ENCODE measurements at regions of chr9 and their contacts with region 1.

Region 1: DNA sequence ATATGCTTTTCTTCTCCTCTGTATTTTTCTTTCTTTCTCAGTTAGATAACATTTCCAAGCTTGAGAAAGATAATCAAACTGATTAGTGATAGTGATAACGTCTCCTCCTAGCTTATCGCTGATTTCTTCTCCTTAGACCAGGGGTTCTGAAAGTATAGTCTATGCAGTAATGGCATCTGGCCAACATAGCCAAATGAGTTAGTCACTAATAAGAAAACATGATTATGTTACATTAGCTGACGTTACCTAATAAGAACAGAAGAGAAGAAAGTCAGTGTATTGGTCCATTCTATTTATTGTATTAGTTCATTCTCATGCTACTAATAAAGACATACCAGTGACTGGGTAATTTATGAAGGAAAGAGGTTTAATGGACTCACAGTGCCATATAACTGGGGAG is 111.2 kb downstream of the STRBP start:
- DNase-seq: no peak
- H3K4me3 Mint-ChIP-seq: no peak overlapping the region
- H3K27ac Mint-ChIP-seq: no peak overlapping the region
- H3K4me1 Mint-ChIP-seq: no peaks in the 10 kb centered on the region
- H3K27me3 Mint-ChIP-seq: no peaks in the 10 kb centered on the region
- CTCF ChIP-seq: no peak

Region 2: DNA sequence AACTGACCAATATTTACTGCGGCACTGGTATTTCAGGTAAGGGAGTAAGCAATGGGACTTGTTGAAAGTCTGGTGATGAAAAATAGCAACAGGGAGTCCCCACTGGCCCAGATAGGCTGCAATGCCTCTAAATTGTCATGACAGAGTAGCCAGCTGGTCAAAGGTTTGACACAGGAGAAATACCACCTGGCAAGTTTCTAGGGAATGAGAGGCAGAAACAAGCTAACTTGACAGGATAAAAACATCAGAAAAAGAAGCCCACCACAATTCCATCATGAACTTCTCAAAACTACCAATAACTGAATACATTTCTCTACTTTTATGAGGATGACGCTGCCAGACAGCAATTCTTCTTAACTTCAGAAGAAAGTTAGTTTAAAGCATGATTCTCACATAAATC is 11.4 kb after region 1 on chr9:
- CTCF ChIA-PET with region 1: no interaction called
- intact Hi-C with region 1: no loop called
- DNase-seq: no peak
- H3K4me3 Mint-ChIP-seq: no peak overlapping the region
- H3K27ac Mint-ChIP-seq: no peak overlapping the region
- H3K4me1 Mint-ChIP-seq: no peaks in the 10 kb centered on the region
- H3K27me3 Mint-ChIP-seq: no peaks in the 10 kb centered on the region
- CTCF ChIP-seq: no peak

Region 3: GRCh38 chr9:123284656-123285055 is 127.4 kb after region 1 on chr9:
- CTCF ChIA-PET with region 1: interaction called, 12 read pairs
- intact Hi-C with region 1: no loop called
- DNase-seq: no peak
- H3K4me3 Mint-ChIP-seq: no peak overlapping the region
- H3K27ac Mint-ChIP-seq: no peak overlapping the region
- H3K4me1 Mint-ChIP-seq: no peaks in the 10 kb centered on the region
- H3K27me3 Mint-ChIP-seq: no peaks in the 10 kb centered on the region
- CTCF ChIP-seq: no peak

Measured in Calu3 (cell line).